Testis (tissue), 5 donors: ENCODE measurements at regions of chr5 and their contacts with region 1.

Region 1: GRCh38 chr5:137320056-137321045 is 178.8 kb downstream of the SPOCK1 start:
- DNase-seq: peak; percentile 69
- H3K4me3 ChIP-seq: no peak overlapping the region
- H3K27ac ChIP-seq: no peak overlapping the region
- H3K4me1 ChIP-seq: peaks cover 18% of the 10 kb centered on the region
- H3K27me3 ChIP-seq: no peaks in the 10 kb centered on the region
- CTCF ChIP-seq: peak; percentile 79 to 88 (median 86)
- POLR2A ChIP-seq: no peak

Region 2: GRCh38 chr5:137370096-137371071 is 50.0 kb after region 1 on chr5:
- intact Hi-C with region 1: no loop called
- DNase-seq: no peak
- H3K4me3 ChIP-seq: no peak overlapping the region
- H3K27ac ChIP-seq: no peak overlapping the region
- H3K4me1 ChIP-seq: no peaks in the 10 kb centered on the region
- H3K27me3 ChIP-seq: no peaks in the 10 kb centered on the region
- CTCF ChIP-seq: no peak
- POLR2A ChIP-seq: no peak

Region 3: GRCh38 chr5:137498736-137499505 is 178.6 kb after region 1 on chr5 and contains the start of gene SPOCK1:
- intact Hi-C with region 1: loop called (anchors 5 kb)
- DNase-seq: peak; percentile 85
- H3K4me3 ChIP-seq: peak within 1 kb of the TSS; percentile 64 to 69
- H3K27ac ChIP-seq: peak within 1 kb of the TSS; percentile 64 to 69
- H3K4me1 ChIP-seq: no peaks in the 10 kb centered on the region
- H3K27me3 ChIP-seq: no peaks in the 10 kb centered on the region
- CTCF ChIP-seq: peak; percentile 80 to 99 (median 92)
- POLR2A ChIP-seq: no peak
- total RNA-seq, gene SPOCK1: 63.8 to 111 TPM